ENCODE measurements at regions of chr11 and their contacts with region 1.

Region 1: GRCh38 chr11:20647976-20648565 is 21.3 kb upstream of the NELL1 start:
- DNase-seq: peak in 8 of 14 experiments; percentile 1 to 53 (median 28)
- ATAC-seq: no peak
- H3K4me3 ChIP-seq: no peak overlapping the region
- H3K4me3 Mint-ChIP-seq: no peak overlapping the region
- H3K27ac ChIP-seq: no peak overlapping the region
- H3K27ac Mint-ChIP-seq: no peak overlapping the region
- H3K4me1 ChIP-seq: no peaks in the 10 kb centered on the region
- H3K4me1 Mint-ChIP-seq: no peaks in the 10 kb centered on the region
- H3K27me3 ChIP-seq: no peaks in the 10 kb centered on the region
- H3K27me3 Mint-ChIP-seq: peaks cover 8% of the 10 kb centered on the region
- CTCF ChIP-seq: peak; percentile 88

Region 2: DNA sequence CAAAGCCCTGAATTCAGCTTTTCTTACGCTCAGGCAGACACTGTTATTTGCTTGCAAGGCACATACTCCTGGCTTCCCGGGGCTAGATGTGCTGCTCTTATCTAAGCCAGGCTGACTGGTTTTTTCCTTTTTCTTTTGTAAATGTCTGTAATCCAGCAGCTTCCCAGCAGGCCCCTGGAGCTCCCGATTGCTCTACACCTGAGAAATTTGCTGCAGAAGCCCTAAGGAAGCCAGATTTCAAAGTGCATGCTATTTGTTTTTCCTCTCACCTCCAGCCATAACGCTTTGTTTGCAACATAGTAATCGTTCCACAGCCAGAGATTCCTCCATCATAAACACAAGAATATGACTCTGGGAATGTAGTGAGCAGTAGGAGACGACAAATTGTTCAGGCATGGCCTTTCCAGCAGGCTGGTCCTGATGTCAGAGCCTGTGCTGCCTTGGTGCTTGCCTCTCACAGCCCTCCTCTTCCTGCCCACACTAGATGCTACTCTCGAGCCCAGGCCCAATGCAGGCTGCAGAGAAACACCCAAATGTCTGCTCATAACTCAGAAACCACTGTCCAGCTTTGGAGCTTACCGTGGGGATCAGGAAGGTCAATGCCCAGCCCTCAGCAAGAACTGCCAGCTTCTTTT is 103.4 kb before region 1 on chr11:
- CTCF ChIA-PET with region 1: no interaction called
- POLR2A ChIA-PET with region 1: no interaction called
- intact Hi-C with region 1: no loop called
- DNase-seq: no peak
- ATAC-seq: no peak
- H3K4me3 ChIP-seq: no peak overlapping the region
- H3K4me3 Mint-ChIP-seq: no peak overlapping the region
- H3K27ac ChIP-seq: no peak overlapping the region
- H3K27ac Mint-ChIP-seq: no peak overlapping the region
- H3K4me1 ChIP-seq: no peaks in the 10 kb centered on the region
- H3K4me1 Mint-ChIP-seq: no peaks in the 10 kb centered on the region
- H3K27me3 ChIP-seq: no peaks in the 10 kb centered on the region
- H3K27me3 Mint-ChIP-seq: no peaks in the 10 kb centered on the region
- CTCF ChIP-seq: no peak

Region 3: DNA sequence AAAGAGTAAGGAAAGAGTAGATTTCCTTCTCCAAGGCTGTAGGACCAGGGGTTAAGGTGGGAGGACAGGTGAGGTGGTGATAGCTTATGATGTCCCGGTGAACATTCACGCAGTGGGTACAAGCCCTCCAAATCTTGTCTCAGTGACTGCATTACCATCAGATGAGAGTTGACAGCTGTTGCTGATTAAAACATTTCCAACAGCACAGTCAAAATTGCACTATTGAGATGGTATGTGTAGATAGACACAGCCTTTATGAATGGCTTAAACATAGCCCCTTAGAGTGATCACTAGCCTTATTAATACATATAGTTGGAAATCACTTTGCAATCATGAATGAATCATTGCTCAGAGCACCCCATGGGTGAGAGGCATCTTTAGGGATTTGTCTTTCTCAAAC is 28.6 kb after region 1 on chr11:
- CTCF ChIA-PET with region 1: no interaction called
- POLR2A ChIA-PET with region 1: no interaction called
- intact Hi-C with region 1: no loop called
- DNase-seq: no peak
- ATAC-seq: no peak
- H3K4me3 ChIP-seq: no peak overlapping the region
- H3K4me3 Mint-ChIP-seq: no peak overlapping the region
- H3K27ac ChIP-seq: no peak overlapping the region
- H3K27ac Mint-ChIP-seq: no peak overlapping the region
- H3K4me1 ChIP-seq: no peaks in the 10 kb centered on the region
- H3K4me1 Mint-ChIP-seq: no peaks in the 10 kb centered on the region
- H3K27me3 ChIP-seq: peaks cover 7 to 21% of the 10 kb centered on the region in 2 experiments
- H3K27me3 Mint-ChIP-seq: peaks cover 55% of the 10 kb centered on the region
- CTCF ChIP-seq: no peak

Region 4: GRCh38 chr11:22304337-22304961 is 1656.4 kb after region 1 on chr11:
- CTCF ChIA-PET with region 1: no interaction called
- POLR2A ChIA-PET with region 1: no interaction called
- intact Hi-C with region 1: loop called in 1 of 2 experiments (anchors 2 kb)
- DNase-seq: peak in 3 of 14 experiments; percentile 21 to 41 (median 23)
- ATAC-seq: no peak
- H3K4me3 ChIP-seq: no peak overlapping the region
- H3K4me3 Mint-ChIP-seq: no peak overlapping the region
- H3K27ac ChIP-seq: no peak overlapping the region
- H3K27ac Mint-ChIP-seq: no peak overlapping the region
- H3K4me1 ChIP-seq: no peaks in the 10 kb centered on the region
- H3K4me1 Mint-ChIP-seq: no peaks in the 10 kb centered on the region
- H3K27me3 ChIP-seq: peaks cover 0 to 6% of the 10 kb centered on the region in 2 experiments
- H3K27me3 Mint-ChIP-seq: peaks cover 21% of the 10 kb centered on the region
- CTCF ChIP-seq: peak; percentile 71

Measured in CD4-positive, alpha-beta T cell (primary cell).